AG04449 (cell line): ENCODE measurements at regions of chr5 and their contacts with region 1.

Region 1: DNA sequence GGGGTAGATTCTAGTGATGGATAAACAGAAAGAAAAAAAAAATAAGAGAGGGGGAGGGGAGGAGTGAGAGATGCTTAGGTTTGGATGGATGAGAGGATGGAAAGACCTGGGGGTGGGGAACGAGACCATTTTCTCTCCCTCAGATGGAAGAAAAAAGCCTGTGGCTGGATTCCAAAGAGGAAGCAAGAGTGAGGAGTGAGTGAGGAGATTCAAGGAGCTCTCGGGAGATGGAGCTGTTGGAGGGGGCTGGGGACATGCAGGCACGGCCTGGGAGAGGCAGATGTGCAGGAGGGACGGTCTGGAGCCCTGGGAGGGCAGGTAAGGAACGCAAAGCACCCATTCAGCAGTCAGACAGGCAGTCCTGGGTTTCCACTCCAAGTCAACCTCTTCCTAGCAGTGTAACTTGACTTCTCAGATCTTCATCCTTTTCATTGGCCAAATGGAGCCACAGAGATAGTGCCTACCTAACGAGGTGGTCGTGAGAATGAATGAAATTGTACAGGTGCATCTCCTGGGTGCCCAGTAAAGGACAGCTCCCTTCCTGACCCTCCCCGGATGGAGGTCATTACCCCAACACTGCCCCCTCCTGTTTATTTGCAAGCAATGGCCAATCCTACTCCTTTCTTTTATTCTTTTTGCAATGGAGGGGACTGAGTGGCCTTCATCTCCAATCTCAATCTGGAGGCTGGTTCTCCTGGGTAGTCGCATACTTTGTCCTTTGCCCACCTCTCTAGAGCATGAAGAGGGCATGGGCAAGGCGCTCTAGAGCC is 52.2 kb downstream of the PCDH1 start:
- DNase-seq: no peak
- H3K4me3 ChIP-seq: no peak overlapping the region
- CTCF ChIP-seq: no peak

Region 2: GRCh38 chr5:141811287-141812155 is 14.5 kb before region 1 on chr5:
- CTCF ChIA-PET with region 1: interaction called, 28 read pairs
- POLR2A ChIA-PET with region 1: no interaction called
- DNase-seq: no peak
- H3K4me3 ChIP-seq: no peak overlapping the region
- CTCF ChIP-seq: peak; percentile 61